Activated T-helper 2 cell treated with anti-CD3 and anti-CD28 coated beads, Interferon-gamma antibody, Interleukin-2, Interleukin-4, amounts not matched to agents 10 μg/mL and 5 μg/mL and 100 μg/mL, durations not matched to agents 14 hours and 24 hours and 36 hours (primary cell): ENCODE measurements at regions of chr6 and their contacts with region 1.

Region 1: GRCh38 chr6:52976591-52977035 is 18.5 kb downstream of the GSTA4 start:
- DNase-seq: no peak
- H3K4me3 Mint-ChIP-seq: peak overlapping the region; percentile 21
- H3K27ac Mint-ChIP-seq: peak overlapping the region; percentile 91
- H3K4me1 Mint-ChIP-seq: peaks cover 51% of the 10 kb centered on the region
- H3K27me3 Mint-ChIP-seq: no peaks in the 10 kb centered on the region

Region 2: DNA sequence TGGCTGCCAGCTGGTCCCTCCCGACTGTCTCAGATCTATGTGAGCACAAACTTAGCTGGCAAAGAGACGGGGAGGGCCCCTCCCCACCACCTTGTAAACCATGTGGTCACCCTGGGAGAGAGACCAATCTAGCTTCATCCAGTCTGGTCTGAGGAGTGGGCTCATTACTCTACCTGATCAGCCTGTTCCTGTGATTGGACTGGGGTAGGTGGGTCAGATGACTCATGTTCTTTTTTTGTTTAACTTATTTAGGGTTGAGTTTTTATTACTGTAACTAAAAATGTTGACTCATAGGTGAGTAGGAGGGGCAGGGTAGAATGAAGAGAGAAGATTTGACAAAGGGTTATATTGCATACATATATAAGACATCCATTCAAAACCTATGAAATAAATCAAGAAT is 13.7 kb after region 1 on chr6:
- intact Hi-C with region 1: loop called (anchors 1 kb)
- DNase-seq: no peak
- H3K4me3 Mint-ChIP-seq: peak overlapping the region; percentile 48
- H3K27ac Mint-ChIP-seq: peak overlapping the region; percentile 90
- H3K4me1 Mint-ChIP-seq: peaks cover 56% of the 10 kb centered on the region
- H3K27me3 Mint-ChIP-seq: peaks cover under 1% of the 10 kb centered on the region

Region 3: DNA sequence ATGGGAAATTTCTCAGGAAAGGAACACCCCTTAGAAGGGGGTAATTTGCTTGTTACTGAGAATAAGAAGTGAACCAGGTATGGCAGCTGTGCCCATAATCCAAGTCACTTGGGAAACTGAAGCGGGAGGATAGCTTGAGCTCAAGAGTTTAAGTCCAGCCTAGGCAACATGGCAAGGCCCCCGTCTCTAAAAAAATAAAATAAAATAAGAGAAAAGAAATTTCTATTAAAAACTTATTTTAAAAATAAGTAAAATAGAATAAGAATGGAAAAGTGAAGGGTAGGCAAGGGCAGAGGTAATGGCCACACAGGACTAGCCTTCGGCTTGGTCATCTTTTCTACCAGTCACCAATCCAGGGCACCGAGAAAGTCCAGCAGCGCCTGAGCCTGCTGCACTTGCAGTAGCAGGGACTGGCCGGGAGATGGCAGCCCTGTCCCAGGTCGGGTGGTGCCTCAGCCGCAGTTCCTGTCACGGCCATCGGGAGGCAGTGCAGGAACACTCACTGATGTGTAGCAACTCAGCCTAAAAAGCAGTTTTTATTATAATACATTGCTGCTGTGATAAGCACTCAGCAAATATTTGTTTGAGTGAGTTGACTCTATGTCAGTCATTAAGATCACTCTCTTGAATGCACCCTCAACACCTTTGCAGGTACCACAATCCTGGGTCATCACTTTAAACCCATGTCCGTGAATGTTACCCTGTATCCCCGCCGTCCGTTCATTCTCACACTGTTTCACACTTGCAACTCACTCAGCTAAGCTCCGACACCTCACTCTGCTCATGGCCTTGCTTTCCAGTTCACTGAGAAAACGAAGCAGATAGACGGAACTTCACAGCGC is 195.2 kb after region 1 on chr6:
- intact Hi-C with region 1: no loop called
- DNase-seq: peak; percentile 78
- H3K4me3 Mint-ChIP-seq: no peak overlapping the region
- H3K27ac Mint-ChIP-seq: no peak overlapping the region
- H3K4me1 Mint-ChIP-seq: no peaks in the 10 kb centered on the region
- H3K27me3 Mint-ChIP-seq: no peaks in the 10 kb centered on the region